Mammary epithelial cell (primary cell): ENCODE measurements at regions of chr18 and their contacts with region 1.

Region 1: GRCh38 chr18:40413160-40413559 is 1541.9 kb upstream of the PIK3C3 start:
- DNase-seq: no peak
- H3K4me3 ChIP-seq: no peak overlapping the region
- H3K27ac ChIP-seq: no peak overlapping the region
- H3K4me1 ChIP-seq: no peaks in the 10 kb centered on the region
- H3K27me3 ChIP-seq: no peaks in the 10 kb centered on the region
- CTCF ChIP-seq: peak; percentile 71 to 74

Region 2: DNA sequence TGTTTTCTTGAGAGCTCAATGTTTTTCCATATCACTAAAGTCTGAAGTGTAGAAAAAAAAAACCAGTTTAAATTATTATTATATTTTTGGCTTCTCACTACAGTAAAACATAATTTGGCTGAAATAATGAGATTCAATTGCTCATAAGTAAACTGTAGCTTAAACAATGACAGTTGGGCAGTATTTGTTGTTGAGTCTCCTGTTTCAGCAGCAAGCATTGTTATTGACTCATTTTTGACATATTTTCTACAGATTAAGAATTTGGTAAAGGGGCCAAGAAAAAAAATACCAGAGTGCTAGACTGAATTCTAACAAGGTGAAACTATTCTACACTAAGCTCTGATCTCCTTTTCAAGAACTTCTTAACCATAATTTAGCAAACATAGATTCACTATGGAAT is 777.2 kb before region 1 on chr18:
- CTCF ChIA-PET with region 1: no interaction called
- dilution Hi-C with region 1: no loop called
- in situ Hi-C with region 1: no loop called
- intact Hi-C with region 1: no loop called
- DNase-seq: no peak
- H3K4me3 ChIP-seq: no peak overlapping the region
- H3K27ac ChIP-seq: no peak overlapping the region
- H3K4me1 ChIP-seq: no peaks in the 10 kb centered on the region
- H3K27me3 ChIP-seq: no peaks in the 10 kb centered on the region
- CTCF ChIP-seq: no peak

Region 3: GRCh38 chr18:39841482-39842365 is 571.4 kb before region 1 on chr18:
- CTCF ChIA-PET with region 1: no interaction called
- dilution Hi-C with region 1: no loop called
- in situ Hi-C with region 1: no loop called
- intact Hi-C with region 1: loop called (anchors 5 kb)
- DNase-seq: peak; percentile 63
- H3K4me3 ChIP-seq: peak overlapping the region; percentile 63 to 76 (median 66)
- H3K27ac ChIP-seq: no peak overlapping the region
- H3K4me1 ChIP-seq: peaks cover 19% of the 10 kb centered on the region
- H3K27me3 ChIP-seq: peaks cover under 1% of the 10 kb centered on the region
- CTCF ChIP-seq: peak; percentile 28 to 74

Region 4: DNA sequence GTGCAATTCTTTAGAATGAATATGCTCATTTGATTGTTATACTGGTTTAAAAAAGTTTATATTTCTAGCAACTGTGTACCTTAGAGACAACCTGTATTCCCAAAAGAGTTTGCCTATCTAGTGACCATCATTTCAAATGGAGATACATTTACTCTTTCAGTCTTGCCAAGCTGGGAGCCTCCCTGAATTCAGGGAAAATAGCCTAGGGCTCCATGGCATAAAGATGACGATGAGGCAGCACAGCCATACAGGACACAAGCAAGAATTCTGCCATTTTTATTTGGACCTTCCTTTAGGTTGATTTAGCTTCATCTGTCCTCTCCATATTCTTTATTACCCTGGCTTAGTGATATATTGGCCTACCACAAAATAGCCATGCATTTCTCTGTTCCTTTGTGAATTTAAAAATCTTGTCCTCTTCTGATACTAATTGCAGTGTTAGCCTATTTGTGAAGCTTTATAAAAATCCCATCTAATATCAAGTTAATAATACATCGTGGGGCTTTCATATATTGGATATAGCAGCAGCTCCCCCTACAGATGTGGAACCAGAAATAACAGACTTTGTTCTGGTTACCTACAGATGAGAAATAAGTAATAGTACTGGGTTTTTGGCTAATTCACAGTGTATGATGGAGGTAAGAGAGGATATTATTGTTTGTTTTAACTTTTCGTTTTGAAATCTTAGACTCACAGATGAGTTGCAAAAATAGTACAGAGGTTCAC is 120.0 kb before region 1 on chr18:
- CTCF ChIA-PET with region 1: interaction called, 3 read pairs
- dilution Hi-C with region 1: no loop called
- in situ Hi-C with region 1: no loop called
- intact Hi-C with region 1: loop called (anchors 5 kb)
- DNase-seq: peak; percentile 0
- H3K4me3 ChIP-seq: no peak overlapping the region
- H3K27ac ChIP-seq: no peak overlapping the region
- H3K4me1 ChIP-seq: no peaks in the 10 kb centered on the region
- H3K27me3 ChIP-seq: no peaks in the 10 kb centered on the region
- CTCF ChIP-seq: peak; percentile 44 to 54

Region 5: DNA sequence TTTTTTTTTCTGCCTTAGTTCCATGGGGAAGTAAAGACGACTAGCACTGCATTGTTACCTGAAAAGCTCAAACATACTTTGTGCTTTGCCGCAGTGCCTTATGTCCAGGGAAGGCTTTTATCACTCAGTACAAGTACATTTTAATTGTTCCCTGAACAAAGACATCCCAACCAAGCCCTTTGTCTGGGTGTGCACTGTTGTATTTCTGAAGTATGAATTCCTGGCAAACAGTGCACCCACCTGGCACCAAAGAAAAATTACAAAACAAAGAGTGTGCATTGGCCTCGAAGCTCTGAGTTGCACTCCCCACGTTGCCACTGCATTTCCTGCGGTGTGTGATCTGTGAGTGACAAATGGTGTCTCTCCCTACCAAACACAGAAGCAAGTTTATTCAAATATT is 683.3 kb after region 1 on chr18:
- CTCF ChIA-PET with region 1: no interaction called
- dilution Hi-C with region 1: no loop called
- in situ Hi-C with region 1: no loop called
- intact Hi-C with region 1: loop called (anchors 1 kb)
- DNase-seq: peak; percentile 35
- H3K4me3 ChIP-seq: no peak overlapping the region
- H3K27ac ChIP-seq: no peak overlapping the region
- H3K4me1 ChIP-seq: peaks cover 5% of the 10 kb centered on the region
- H3K27me3 ChIP-seq: no peaks in the 10 kb centered on the region
- CTCF ChIP-seq: peak; percentile 47 to 58

Region 6: DNA sequence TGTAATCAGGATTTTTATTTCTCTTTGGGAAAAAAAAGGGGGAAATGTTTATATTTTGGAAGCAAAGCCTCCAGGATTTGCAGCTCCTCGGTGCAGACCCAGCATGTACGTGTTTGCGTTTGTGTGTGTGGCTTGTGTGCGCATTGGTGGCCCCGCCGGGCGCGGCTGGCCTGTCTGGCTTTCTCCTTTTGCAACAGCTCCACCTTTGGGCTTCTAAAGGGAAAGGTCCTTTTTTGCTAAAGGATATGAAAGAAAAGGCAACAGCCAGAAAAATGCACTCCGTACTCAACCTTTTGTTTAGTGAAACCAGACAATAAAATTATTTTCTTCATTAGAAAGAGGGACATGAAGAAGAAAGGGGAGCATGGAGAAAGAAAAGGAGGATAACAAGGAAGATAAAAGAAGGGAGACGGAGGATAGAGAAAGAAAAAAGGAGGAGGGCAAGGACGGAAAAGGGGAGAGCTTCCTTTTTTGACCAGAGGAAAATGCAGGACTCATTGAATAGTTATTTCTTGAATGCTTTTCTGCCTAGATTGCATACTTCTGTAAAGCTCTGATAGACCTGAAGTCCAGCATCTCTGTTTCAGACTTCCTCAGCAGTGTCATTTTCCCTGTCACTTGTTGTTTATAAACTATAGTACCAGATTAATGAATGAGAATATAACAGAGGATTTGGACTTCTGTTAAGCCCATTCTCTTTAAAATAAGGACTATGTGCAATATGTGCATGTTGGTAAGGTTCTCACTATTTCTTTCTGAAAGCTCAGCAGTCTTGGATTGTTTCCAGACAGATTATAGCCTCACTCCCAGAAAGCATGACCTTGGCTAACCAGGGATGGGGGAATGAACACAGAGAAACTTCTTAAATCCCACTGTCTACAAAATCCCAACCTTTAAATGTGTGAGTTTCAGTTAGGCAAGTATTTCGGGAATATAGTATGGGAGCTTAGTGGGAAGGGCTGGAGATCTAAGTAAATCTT is 978.7 kb after region 1 on chr18:
- CTCF ChIA-PET with region 1: no interaction called
- dilution Hi-C with region 1: no loop called
- in situ Hi-C with region 1: loop called in 1 of 2 experiments (anchors 25 kb)
- intact Hi-C with region 1: loop called (anchors 5 kb)
- DNase-seq: peak; percentile 34
- H3K4me3 ChIP-seq: peak overlapping the region; percentile 34 to 61 (median 45)
- H3K27ac ChIP-seq: no peak overlapping the region
- H3K4me1 ChIP-seq: peaks cover 5% of the 10 kb centered on the region
- H3K27me3 ChIP-seq: no peaks in the 10 kb centered on the region
- CTCF ChIP-seq: peak; percentile 61 to 83